SK-N-SH (cell line): ENCODE measurements at regions of chr9 and their contacts with region 1.

Region 1: DNA sequence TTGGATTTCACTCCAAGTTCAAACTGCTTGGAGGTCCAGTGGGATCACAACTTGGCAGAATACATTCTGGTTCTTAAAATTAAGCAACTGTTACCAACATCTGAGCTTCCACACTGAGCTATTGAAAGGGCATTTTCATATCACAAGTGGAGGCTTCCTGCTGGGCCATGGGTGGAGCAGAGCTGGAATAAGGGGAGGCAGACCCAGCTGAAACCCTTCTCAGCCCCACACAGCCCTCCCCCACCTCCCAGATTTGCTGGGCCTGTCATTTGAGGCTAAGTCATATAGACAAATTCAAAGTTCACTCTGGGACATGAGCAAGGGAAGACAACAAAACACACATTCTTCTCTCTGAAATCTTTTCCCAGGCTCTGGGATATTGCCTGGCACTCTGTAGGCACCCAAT is 79.9 kb downstream of the ACTL7B start:
- DNase-seq: no peak
- H3K4me3 ChIP-seq: no peak overlapping the region
- H3K27ac ChIP-seq: no peak overlapping the region
- H3K4me1 ChIP-seq: no peaks in the 10 kb centered on the region
- H3K27me3 ChIP-seq: peaks cover 51% of the 10 kb centered on the region
- CTCF ChIP-seq: no peak
- EP300 ChIP-seq: no peak
- RAD21 ChIP-seq: no peak

Region 2: DNA sequence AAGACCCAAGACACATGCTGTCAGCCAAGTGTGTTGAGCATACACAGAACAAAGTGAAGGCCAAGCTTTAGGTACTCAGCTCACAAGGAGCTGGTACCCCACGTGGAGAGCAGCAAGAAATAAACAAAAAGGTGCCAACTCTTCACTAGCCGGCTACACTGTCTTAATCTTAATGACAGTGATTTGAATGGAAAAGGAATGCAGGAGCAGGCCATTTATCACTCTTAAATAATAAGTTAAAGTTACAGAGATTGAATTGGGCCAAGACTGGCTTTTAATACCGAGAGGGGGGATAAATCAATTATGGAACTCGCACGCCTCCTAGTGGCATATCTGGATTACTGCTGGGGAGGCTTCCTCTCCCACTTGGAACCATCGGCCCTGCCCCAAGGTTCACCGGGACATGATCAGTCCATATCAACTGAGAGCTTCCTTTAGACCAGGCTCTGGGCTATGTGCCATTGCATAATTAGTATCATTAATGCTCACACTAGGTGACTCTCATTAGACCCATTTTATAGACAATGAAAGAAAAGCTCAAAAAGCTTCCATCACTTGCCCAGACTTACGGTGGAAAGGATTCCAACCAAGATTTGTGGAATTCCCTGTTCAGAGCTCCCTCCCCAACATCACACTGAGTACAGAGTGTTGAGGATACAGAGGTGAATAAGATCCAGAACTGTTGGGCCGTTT is 14.1 kb before region 1 on chr9:
- CTCF ChIA-PET with region 1: interaction called, 10 read pairs
- POLR2A ChIA-PET with region 1: no interaction called
- DNase-seq: peak; percentile 69
- H3K4me3 ChIP-seq: no peak overlapping the region; a peak in 1 of 4 replicates
- H3K27ac ChIP-seq: no peak overlapping the region
- H3K4me1 ChIP-seq: no peaks in the 10 kb centered on the region
- H3K27me3 ChIP-seq: peaks cover 6% of the 10 kb centered on the region; the same call in 1 of the 2 replicates
- CTCF ChIP-seq: peak; percentile 91
- EP300 ChIP-seq: no peak
- RAD21 ChIP-seq: peak; percentile 82

Region 3: GRCh38 chr9:108813951-108814601 is 38.2 kb after region 1 on chr9:
- CTCF ChIA-PET with region 1: no interaction called
- POLR2A ChIA-PET with region 1: no interaction called
- DNase-seq: no peak
- H3K4me3 ChIP-seq: no peak overlapping the region
- H3K27ac ChIP-seq: no peak overlapping the region
- H3K4me1 ChIP-seq: no peaks in the 10 kb centered on the region
- H3K27me3 ChIP-seq: peaks cover 18% of the 10 kb centered on the region; the same call in 1 of the 2 replicates
- CTCF ChIP-seq: peak; percentile 49
- EP300 ChIP-seq: no peak
- RAD21 ChIP-seq: peak; percentile 40

Region 4: GRCh38 chr9:109010746-109011145 is 234.8 kb after region 1 on chr9:
- CTCF ChIA-PET with region 1: no interaction called
- POLR2A ChIA-PET with region 1: no interaction called
- DNase-seq: no peak
- H3K4me3 ChIP-seq: 0 out of 4 replicates have a peak overlapping the region, but pooled peaks of 1 of the 2 experiments have one; percentile 9
- H3K27ac ChIP-seq: peak overlapping the region in 1 of 2 experiments; percentile 91; a peak in 2 of 4 replicates
- H3K4me1 ChIP-seq: peaks cover 13 to 22% of the 10 kb centered on the region in 2 experiments
- H3K27me3 ChIP-seq: no peaks in the 10 kb centered on the region
- CTCF ChIP-seq: no peak
- EP300 ChIP-seq: no peak
- RAD21 ChIP-seq: no peak